ENCODE measurements at regions of chr20 and their contacts with region 1.

Region 1: DNA sequence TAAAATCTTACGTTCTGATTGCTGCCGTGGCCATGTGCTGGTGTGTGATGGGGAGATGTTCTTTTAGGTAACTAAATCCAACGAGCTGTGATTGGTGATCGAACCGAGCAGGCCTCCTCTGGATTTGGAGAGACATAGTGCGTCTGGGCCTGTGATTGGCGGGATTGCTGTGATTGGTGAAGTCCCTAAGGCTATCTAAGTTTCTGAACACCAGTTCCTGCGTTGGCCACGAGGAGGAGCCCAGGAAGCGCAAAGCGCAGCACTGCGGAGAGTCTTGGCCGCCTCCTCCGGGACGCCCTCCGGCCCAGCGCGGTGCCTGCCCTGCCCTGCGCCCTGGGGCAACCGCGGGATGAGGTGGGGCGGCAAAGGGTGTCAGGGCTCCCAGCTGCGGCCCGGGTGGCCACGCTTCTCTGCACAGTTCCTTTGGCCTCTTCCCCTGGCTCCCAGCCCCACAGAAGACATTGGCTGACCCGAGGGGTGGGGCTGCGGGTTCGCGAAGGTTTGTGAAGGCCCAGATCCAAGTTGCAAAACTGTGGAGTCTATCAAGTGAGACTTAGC is 33.0 kb downstream of the HNF4A start:
- DNase-seq: peak; percentile 74 to 79 (median 76)
- ATAC-seq: peak; percentile 92
- H3K4me3 ChIP-seq: no peak overlapping the region
- H3K27ac ChIP-seq: no peak overlapping the region
- H3K4me1 ChIP-seq: peaks cover 0 to 6% of the 10 kb centered on the region in 2 experiments; a peak in 3 of 5 replicates
- H3K27me3 ChIP-seq: peaks cover 2 to 20% of the 10 kb centered on the region in 2 experiments; a peak in 2 of 5 replicates
- CTCF ChIP-seq: peak; percentile 91 to 94 (median 92)
- EP300 ChIP-seq: no peak
- POLR2A ChIP-seq: no peak
- RAD21 ChIP-seq: peak; percentile 97 to 100

Region 2: GRCh38 chr20:44115762-44116644 is 272.5 kb before region 1 on chr20:
- CTCF ChIA-PET with region 1: interaction called, 9 read pairs
- POLR2A ChIA-PET with region 1: no interaction called
- in situ Hi-C with region 1: loop called (anchors 5 kb)
- intact Hi-C with region 1: loop called (anchors 1 kb)
- DNase-seq: no peak
- ATAC-seq: no peak
- H3K4me3 ChIP-seq: no peak overlapping the region
- H3K27ac ChIP-seq: no peak overlapping the region
- H3K4me1 ChIP-seq: peaks cover 0 to 9% of the 10 kb centered on the region in 2 experiments; a peak in 2 of 5 replicates
- H3K27me3 ChIP-seq: peaks cover 13 to 57% of the 10 kb centered on the region in 2 experiments
- CTCF ChIP-seq: no peak
- EP300 ChIP-seq: no peak
- POLR2A ChIP-seq: no peak
- RAD21 ChIP-seq: no peak

Region 3: GRCh38 chr20:44217342-44218092 is 171.0 kb before region 1 on chr20:
- CTCF ChIA-PET with region 1: interaction called, 79 read pairs
- POLR2A ChIA-PET with region 1: no interaction called
- in situ Hi-C with region 1: loop called (anchors 5 kb)
- intact Hi-C with region 1: loop called (anchors 1 kb)
- DNase-seq: peak; percentile 64 to 85 (median 66)
- ATAC-seq: peak; percentile 91
- H3K4me3 ChIP-seq: no peak overlapping the region
- H3K27ac ChIP-seq: no peak overlapping the region
- H3K4me1 ChIP-seq: peaks cover 4 to 11% of the 10 kb centered on the region in 2 experiments; a peak in 4 of 5 replicates
- H3K27me3 ChIP-seq: peaks cover 0 to 9% of the 10 kb centered on the region in 2 experiments; a peak in 2 of 5 replicates
- CTCF ChIP-seq: peak; percentile 91 to 98 (median 96)
- EP300 ChIP-seq: no peak
- POLR2A ChIP-seq: no peak
- RAD21 ChIP-seq: peak; percentile 94 to 96

Region 4: GRCh38 chr20:44460795-44461141 is 72.2 kb after region 1 on chr20:
- CTCF ChIA-PET with region 1: interaction called, 54 read pairs
- POLR2A ChIA-PET with region 1: interaction called, 3 read pairs
- in situ Hi-C with region 1: loop called (anchors 5 kb)
- intact Hi-C with region 1: loop called (anchors 1 kb)
- DNase-seq: peak; percentile 28 to 50 (median 36)
- ATAC-seq: peak; percentile 69
- H3K4me3 ChIP-seq: no peak overlapping the region
- H3K27ac ChIP-seq: no peak overlapping the region
- H3K4me1 ChIP-seq: peaks cover 0 to 4% of the 10 kb centered on the region in 2 experiments; a peak in 2 of 5 replicates
- H3K27me3 ChIP-seq: peaks cover 7 to 23% of the 10 kb centered on the region in 2 experiments; a peak in 2 of 5 replicates
- CTCF ChIP-seq: peak; percentile 52 to 83 (median 55); a peak in 5 of 6 replicates
- EP300 ChIP-seq: no peak
- POLR2A ChIP-seq: no peak
- RAD21 ChIP-seq: peak; percentile 83 to 92

Region 5: DNA sequence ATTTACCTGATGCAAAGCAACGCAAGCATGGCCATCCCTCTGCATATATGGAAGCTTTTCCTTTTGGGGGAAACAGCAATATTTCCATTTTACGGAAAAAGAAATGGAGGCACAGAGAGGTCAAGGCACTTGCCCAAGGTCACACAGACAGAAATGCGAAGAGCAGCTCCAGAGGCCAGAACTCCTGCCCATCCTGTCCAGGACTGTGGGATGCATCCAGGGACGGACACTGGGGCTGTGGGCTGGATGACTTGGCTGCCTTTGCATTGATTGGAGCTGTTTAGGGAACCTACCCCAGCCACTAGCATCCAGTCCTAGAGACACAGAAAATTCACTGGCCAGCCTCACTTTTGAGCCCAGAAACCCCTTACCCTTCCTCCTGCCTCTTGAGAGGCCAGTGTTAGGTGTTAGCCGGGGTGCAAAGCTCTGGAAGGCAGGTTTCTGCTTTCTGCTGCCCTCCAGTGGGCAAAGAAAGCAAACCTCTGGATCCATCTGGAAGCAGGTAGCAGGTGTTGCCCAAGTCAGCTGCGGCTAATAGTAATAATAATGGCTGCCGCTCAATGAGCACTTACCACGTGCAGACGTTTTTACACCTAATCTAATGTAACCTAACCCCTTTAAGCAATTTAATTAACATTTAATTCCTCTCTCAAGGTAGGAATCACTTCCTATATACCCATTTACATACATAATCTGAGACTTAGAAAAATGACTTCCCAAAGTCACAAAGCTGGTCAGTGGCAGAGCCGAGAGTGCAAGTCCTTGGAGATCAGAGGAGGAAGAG is 294.9 kb after region 1 on chr20:
- CTCF ChIA-PET with region 1: no interaction called
- POLR2A ChIA-PET with region 1: no interaction called
- in situ Hi-C with region 1: no loop called
- intact Hi-C with region 1: loop called (anchors 5 kb)
- DNase-seq: peak; percentile 68 to 87 (median 80)
- ATAC-seq: peak; percentile 93
- H3K4me3 ChIP-seq: no peak overlapping the region
- H3K27ac ChIP-seq: no peak overlapping the region
- H3K4me1 ChIP-seq: peaks cover 5% of the 10 kb centered on the region in 2 experiments; a peak in 3 of 5 replicates
- H3K27me3 ChIP-seq: peaks cover 13 to 14% of the 10 kb centered on the region in 2 experiments; a peak in 4 of 5 replicates
- CTCF ChIP-seq: peak; percentile 75 to 77 (median 76)
- EP300 ChIP-seq: no peak
- POLR2A ChIP-seq: no peak
- RAD21 ChIP-seq: peak; percentile 46 to 78

Measured in K562 (cell line).